A549 (cell line): ENCODE measurements at regions of chr10 and their contacts with region 1.

Region 1: DNA sequence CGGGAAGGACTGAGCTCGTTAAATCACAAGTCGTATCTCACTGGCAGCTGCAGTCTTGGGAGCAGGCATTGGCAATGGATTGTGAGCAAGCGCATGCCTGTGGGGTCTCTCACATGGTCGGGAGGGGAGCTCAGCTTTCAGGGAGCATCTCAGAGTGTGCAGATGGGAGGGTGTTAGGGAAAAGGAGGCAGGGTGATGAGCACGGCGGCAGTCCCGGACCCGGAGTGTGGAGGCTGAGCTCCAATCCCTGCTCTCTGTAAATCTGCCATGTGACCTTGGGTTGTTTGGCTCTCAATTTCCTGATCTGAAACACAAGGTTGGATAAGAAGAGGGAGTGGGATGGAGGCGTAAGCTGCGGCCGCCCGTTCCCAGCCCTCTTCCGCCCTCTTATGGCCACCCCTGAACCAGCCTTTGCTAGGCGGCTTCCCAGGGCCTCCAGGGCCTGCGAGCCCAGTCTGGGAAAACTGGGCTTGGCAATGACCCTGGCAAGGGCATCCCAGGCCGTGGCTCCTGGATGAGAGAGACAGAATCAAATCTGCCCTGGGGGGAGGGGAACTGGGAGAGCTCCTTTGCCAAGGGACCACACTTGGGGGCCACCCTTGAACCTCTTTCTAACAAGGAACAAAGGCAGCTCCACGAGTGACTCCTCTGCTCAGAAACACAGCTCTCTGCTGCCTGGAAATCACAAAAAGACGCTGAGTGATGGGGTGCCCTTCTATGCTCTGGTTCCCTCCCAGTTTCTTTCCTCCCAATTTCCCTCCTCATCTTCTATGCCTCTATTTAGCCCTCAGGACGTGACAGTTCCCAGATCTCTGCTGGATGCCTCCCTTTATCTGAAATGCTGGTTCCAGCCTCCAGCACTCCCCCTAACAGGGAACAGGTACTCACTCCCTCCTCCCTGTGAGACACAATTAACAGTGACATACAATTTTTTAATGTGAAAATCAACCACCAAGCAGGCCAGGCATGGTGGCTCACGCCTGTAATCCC is 41.7 kb upstream of the LOXL4 start:
- DNase-seq: peak; percentile 68 to 89
- ATAC-seq: peak; percentile 95 to 99
- H3K4me3 ChIP-seq: no peak overlapping the region
- H3K27ac ChIP-seq: peak overlapping the region in 1 of 2 experiments; percentile 35; a peak in 1 of 6 replicates
- H3K4me1 ChIP-seq: no peaks in the 10 kb centered on the region
- CTCF ChIP-seq: peak; percentile 74
- EP300 ChIP-seq: no peak
- POLR2A ChIP-seq: no peak
- RAD21 ChIP-seq: peak; percentile 90 to 93

Region 2: DNA sequence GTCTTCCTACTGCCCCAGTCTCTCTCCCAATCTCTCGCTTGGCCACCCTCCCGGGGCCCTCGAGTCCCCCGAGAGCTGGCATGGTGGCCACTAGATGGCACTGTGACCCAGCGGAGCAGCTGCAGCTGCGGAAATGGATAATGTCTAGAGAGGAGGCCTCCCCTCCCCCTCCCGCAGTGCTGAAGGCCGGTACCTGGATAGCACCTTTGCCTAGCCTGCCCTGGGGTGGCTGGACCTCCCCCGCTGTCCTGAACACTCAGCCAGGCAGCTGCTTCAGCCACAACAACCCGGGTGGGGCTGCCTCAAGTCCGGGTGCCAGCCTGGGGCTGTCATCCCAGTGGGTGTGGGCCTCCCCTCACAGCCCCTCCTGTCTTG is 394.8 kb before region 1 on chr10:
- CTCF ChIA-PET with region 1: interaction called, 18 read pairs
- POLR2A ChIA-PET with region 1: no interaction called
- DNase-seq: peak; percentile 66 to 82
- ATAC-seq: peak; percentile 90 to 97
- H3K4me3 ChIP-seq: no peak overlapping the region
- H3K27ac ChIP-seq: peak overlapping the region; percentile 3 to 69; a peak in 3 of 6 replicates
- H3K4me1 ChIP-seq: 0 out of 3 replicates have a peak, but pooled peaks cover 2% of the 10 kb centered on the region
- CTCF ChIP-seq: peak; percentile 93
- EP300 ChIP-seq: no peak
- POLR2A ChIP-seq: no peak
- RAD21 ChIP-seq: peak; percentile 96 to 97

Region 3: DNA sequence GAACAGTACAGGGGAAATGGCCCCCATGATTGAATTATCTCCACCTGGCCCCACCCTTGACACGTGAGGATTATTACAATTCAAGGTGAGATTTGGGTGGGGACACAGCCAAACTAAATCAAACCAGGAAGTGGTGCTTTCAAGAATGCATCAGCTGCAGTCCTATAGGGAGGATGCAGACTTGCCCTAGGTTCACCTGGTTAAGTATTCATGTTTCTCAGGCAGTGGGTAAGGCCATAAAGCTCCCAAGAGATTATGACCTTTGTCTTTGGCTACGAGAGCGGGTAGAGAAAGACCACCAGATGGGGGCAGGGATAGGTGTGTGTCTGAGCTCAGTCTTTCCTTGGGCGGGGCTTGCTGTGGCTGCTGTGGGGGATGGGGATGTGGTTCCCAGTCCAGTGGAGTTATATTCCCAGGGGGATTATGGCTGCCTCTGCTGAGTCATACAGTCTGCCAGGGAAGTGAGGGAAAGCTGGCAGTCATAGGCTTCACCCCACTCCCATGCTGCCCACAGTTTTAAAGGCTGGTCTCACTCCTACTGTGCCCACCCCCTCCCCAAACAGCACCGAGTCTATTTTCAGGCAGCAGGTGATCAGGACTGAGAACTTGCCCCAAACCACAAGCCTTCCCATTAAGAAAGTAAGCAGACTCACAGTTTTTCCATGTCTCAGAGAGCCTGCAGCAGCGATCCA is 183.6 kb before region 1 on chr10:
- CTCF ChIA-PET with region 1: no interaction called
- POLR2A ChIA-PET with region 1: no interaction called
- DNase-seq: no peak
- ATAC-seq: no peak
- H3K4me3 ChIP-seq: no peak overlapping the region
- H3K27ac ChIP-seq: no peak overlapping the region
- H3K4me1 ChIP-seq: no peaks in the 10 kb centered on the region
- CTCF ChIP-seq: no peak
- EP300 ChIP-seq: no peak
- POLR2A ChIP-seq: no peak
- RAD21 ChIP-seq: no peak

Region 4: GRCh38 chr10:98242823-98243222 is 66.8 kb before region 1 on chr10:
- CTCF ChIA-PET with region 1: interaction called, 68 read pairs
- POLR2A ChIA-PET with region 1: no interaction called
- DNase-seq: peak in 1 of 2 experiments; percentile 19
- ATAC-seq: peak; percentile 34 to 43; a peak in 2 of 6 replicates
- H3K4me3 ChIP-seq: no peak overlapping the region
- H3K27ac ChIP-seq: no peak overlapping the region
- H3K4me1 ChIP-seq: no peaks in the 10 kb centered on the region
- CTCF ChIP-seq: peak; percentile 60
- EP300 ChIP-seq: no peak
- POLR2A ChIP-seq: no peak
- RAD21 ChIP-seq: peak; percentile 67 to 72

Region 5: GRCh38 chr10:98262571-98262970 is 47.1 kb before region 1 on chr10:
- CTCF ChIA-PET with region 1: interaction called, 23 read pairs
- POLR2A ChIA-PET with region 1: no interaction called
- DNase-seq: peak in 1 of 2 experiments; percentile 43
- ATAC-seq: peak in 1 of 2 experiments; percentile 56; a peak in 3 of 6 replicates
- H3K4me3 ChIP-seq: no peak overlapping the region
- H3K27ac ChIP-seq: no peak overlapping the region
- H3K4me1 ChIP-seq: peaks cover 11% of the 10 kb centered on the region; the same call in 2 of the 3 replicates
- CTCF ChIP-seq: peak; percentile 29; the same call in 2 of the 3 replicates
- EP300 ChIP-seq: no peak
- POLR2A ChIP-seq: no peak
- RAD21 ChIP-seq: peak; percentile 32 to 66; a peak in 3 of 5 replicates

Region 6: DNA sequence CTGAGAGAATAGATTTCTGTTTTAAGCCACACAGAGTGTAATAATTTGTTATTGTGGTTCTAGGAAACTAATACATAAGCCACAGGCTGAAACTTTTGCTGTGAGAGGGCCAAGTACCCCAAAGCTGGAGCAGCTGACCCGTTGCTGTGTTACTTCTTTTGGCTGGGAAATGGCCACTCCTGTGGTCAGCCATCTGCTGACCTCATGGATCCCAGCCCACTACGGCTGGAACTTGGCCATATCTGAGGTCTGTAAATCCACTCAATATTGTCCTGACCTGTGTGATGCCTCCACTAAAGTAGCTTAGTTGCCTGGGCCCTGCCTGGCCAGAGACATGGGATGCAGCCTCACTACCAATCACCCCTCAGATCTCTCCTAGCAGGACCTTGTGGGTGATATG is 24.2 kb before region 1 on chr10:
- CTCF ChIA-PET with region 1: interaction called, 12 read pairs
- POLR2A ChIA-PET with region 1: no interaction called
- DNase-seq: no peak
- ATAC-seq: no peak
- H3K4me3 ChIP-seq: no peak overlapping the region
- H3K27ac ChIP-seq: no peak overlapping the region
- H3K4me1 ChIP-seq: no peaks in the 10 kb centered on the region
- CTCF ChIP-seq: no peak
- EP300 ChIP-seq: no peak
- POLR2A ChIP-seq: no peak
- RAD21 ChIP-seq: no peak

Region 7: GRCh38 chr10:98323221-98324164 is 13.8 kb after region 1 on chr10:
- CTCF ChIA-PET with region 1: interaction called, 16 read pairs
- POLR2A ChIA-PET with region 1: no interaction called
- DNase-seq: peak in 1 of 2 experiments; percentile 10
- ATAC-seq: peak in 1 of 2 experiments; percentile 24; a peak in 2 of 6 replicates
- H3K4me3 ChIP-seq: no peak overlapping the region
- H3K27ac ChIP-seq: no peak overlapping the region
- H3K4me1 ChIP-seq: peaks cover 4% of the 10 kb centered on the region; the same call in 1 of the 3 replicates
- CTCF ChIP-seq: no peak
- EP300 ChIP-seq: no peak
- POLR2A ChIP-seq: no peak
- RAD21 ChIP-seq: no peak